A549 (cell line): ENCODE measurements at regions of chr17 and their contacts with region 1.

Region 1: DNA sequence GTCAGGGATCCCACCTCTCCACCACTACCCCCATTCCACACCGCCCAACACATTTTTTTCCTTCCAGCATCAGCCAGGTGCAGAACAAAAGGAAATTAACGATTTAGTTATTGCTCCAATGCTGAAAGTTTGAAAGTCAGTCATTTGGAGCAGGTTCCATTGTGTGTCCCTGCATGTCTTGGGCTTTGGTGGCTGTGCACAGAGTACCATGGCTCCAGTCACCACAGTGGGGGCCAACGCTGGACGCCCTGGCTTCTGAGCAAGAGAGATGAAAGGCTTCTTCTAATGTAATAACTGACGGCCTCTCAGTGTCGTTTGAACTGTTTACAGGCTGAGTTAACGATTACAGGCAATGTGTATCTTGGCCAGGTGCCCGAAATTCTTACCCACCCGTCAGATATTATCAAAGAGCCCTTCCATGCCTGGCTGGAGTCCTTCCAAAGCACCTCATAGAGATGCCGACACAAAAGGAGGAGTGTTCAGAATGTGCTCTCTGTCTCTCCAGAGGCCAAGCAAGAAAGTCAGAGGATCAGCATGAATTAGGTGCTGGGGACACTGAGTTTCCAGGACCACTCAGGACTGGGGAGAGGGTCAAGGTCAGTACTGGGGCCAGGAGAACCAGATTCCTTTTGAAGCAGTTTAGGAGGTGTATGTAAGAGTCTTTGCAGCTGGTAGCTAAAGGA is 25.9 kb downstream of the RNF43 start:
- DNase-seq: peak; percentile 67 to 96
- ATAC-seq: peak; percentile 89 to 90
- H3K4me3 ChIP-seq: peak overlapping the region; percentile 4; the same call in 1 of the 3 replicates
- H3K27ac ChIP-seq: peak overlapping the region; percentile 77 to 84
- H3K4me1 ChIP-seq: peaks cover 72% of the 10 kb centered on the region
- CTCF ChIP-seq: no peak
- EP300 ChIP-seq: peak; percentile 90 to 95; a peak in 4 of 5 replicates
- POLR2A ChIP-seq: no peak
- RAD21 ChIP-seq: peak; percentile 24 to 66; a peak in 3 of 5 replicates

Region 2: GRCh38 chr17:58377093-58377601 is 14.3 kb before region 1 on chr17:
- CTCF ChIA-PET with region 1: interaction called, 16 read pairs
- POLR2A ChIA-PET with region 1: no interaction called
- DNase-seq: no peak
- ATAC-seq: no peak
- H3K4me3 ChIP-seq: no peak overlapping the region
- H3K27ac ChIP-seq: peak overlapping the region in 1 of 2 experiments; percentile 22; a peak in 1 of 6 replicates
- H3K4me1 ChIP-seq: peaks cover 51% of the 10 kb centered on the region
- CTCF ChIP-seq: no peak
- EP300 ChIP-seq: no peak
- POLR2A ChIP-seq: no peak
- RAD21 ChIP-seq: no peak